GM12878 (cell line): ENCODE measurements at regions of chr18 and their contacts with region 1.

Region 1: GRCh38 chr18:58541789-58542425 is 87.0 kb downstream of the ALPK2 start:
- DNase-seq: peak; percentile 91
- ATAC-seq: peak; percentile 52
- H3K4me3 ChIP-seq: no peak overlapping the region
- H3K27ac ChIP-seq: peak overlapping the region; percentile 100
- H3K4me1 ChIP-seq: peaks cover 62% of the 10 kb centered on the region
- H3K27me3 ChIP-seq: no peaks in the 10 kb centered on the region
- CTCF ChIP-seq: no peak
- EP300 ChIP-seq: peak; percentile 75 to 91; a peak in 3 of 4 replicates
- POLR2A ChIP-seq: no peak
- RAD21 ChIP-seq: peak; percentile 24; the same call in 1 of the 2 replicates

Region 2: DNA sequence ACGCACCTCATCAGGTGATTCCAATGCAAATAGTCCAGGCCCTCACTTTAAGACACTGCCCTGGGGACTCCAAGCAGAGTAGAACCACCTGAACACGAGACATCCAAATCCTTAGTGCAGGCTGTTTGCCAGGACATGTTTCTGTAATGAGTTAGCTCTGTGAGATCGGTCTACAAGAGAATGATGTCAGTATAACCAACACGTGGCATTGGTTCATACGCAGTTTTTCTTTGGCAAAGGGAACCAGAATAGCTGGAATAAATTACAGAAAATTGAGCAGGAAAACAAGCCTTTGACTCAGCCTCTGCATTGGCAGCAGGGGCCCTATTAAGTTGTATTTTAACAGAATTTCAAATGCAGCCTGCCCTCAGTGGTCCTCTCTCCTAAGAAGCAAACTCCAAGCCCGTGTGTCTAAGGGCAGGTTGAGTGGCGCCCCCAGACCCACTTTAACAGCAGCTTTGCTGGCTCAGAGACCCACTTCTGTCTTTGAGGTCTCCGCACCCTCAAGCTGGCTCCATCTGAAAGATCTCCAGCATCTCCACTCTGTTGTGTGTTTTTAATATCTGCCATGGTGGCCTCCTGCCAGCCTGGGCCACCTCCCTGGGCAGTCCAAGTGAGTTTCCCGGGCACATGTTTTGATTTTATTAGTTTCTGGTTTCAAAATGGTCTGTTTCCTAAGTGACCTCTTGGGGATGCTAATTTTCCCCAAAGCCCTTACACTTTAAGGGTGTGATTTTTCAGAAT is 25.7 kb after region 1 on chr18:
- CTCF ChIA-PET with region 1: interaction called, 83 read pairs
- POLR2A ChIA-PET with region 1: interaction called, 53 read pairs
- RAD21 ChIA-PET with region 1: interaction called, 353 read pairs
- SMC1A ChIA-PET with region 1: interaction called, 578 read pairs
- in situ Hi-C with region 1: no loop called
- intact Hi-C with region 1: loop called (anchors 1 kb)
- DNase-seq: no peak
- ATAC-seq: no peak
- H3K4me3 ChIP-seq: no peak overlapping the region
- H3K27ac ChIP-seq: no peak overlapping the region
- H3K4me1 ChIP-seq: peaks cover 28% of the 10 kb centered on the region
- H3K27me3 ChIP-seq: no peaks in the 10 kb centered on the region
- CTCF ChIP-seq: no peak
- EP300 ChIP-seq: no peak
- POLR2A ChIP-seq: no peak
- RAD21 ChIP-seq: no peak

Region 3: GRCh38 chr18:58649966-58650816 is 108.3 kb after region 1 on chr18:
- CTCF ChIA-PET with region 1: interaction called, 5 read pairs
- POLR2A ChIA-PET with region 1: interaction called, 14 read pairs
- RAD21 ChIA-PET with region 1: interaction called, 11 read pairs
- SMC1A ChIA-PET with region 1: interaction called, 682 read pairs
- in situ Hi-C with region 1: no loop called
- intact Hi-C with region 1: no loop called
- DNase-seq: peak; percentile 80
- ATAC-seq: peak; percentile 81
- H3K4me3 ChIP-seq: 0 out of 2 replicates have a peak overlapping the region, but pooled peaks have one; percentile 12
- H3K27ac ChIP-seq: peak overlapping the region; percentile 80
- H3K4me1 ChIP-seq: peaks cover 24% of the 10 kb centered on the region
- H3K27me3 ChIP-seq: no peaks in the 10 kb centered on the region
- CTCF ChIP-seq: no peak
- EP300 ChIP-seq: peak; percentile 37 to 85; a peak in 3 of 4 replicates
- POLR2A ChIP-seq: no peak
- RAD21 ChIP-seq: 0 out of 2 replicates have a peak, but pooled peaks have one; percentile 1

Region 4: DNA sequence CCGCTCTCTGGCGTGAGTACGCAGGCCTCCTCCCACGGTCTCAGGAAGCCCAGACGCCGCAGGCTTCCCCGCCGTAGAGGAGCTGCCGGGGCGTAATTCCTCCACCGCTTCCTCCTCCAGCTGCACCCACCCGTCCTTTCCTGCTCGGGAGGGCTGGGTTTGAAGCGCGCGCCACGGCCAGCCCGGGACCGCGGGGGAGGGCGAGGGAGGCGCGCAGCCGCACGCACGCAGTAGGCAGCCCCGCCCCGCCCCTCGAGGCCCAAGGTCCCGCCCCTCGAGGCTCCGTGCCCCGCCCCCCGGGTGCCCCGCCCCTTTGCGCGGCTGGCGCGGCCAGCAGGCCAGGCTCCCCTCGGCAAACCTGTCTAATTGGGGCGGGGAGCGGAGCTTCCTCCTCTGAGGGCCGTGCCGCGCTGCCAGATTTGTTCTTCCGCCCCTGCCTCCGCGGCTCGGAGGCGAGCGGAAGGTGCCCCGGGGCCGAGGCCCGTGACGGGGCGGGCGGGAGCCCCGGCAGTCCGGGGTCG is 129.3 kb after region 1 on chr18 and contains the start of gene MALT1:
- CTCF ChIA-PET with region 1: interaction called, 32 read pairs
- POLR2A ChIA-PET with region 1: interaction called, 40 read pairs
- RAD21 ChIA-PET with region 1: interaction called, 113 read pairs
- SMC1A ChIA-PET with region 1: interaction called, 682 read pairs
- in situ Hi-C with region 1: no loop called
- intact Hi-C with region 1: loop called (anchors 2 kb)
- DNase-seq: peak; percentile 75
- ATAC-seq: peak; percentile 78
- H3K4me3 ChIP-seq: peak within 1 kb of the TSS; percentile 95
- H3K27ac ChIP-seq: peak within 1 kb of the TSS; percentile 93
- H3K4me1 ChIP-seq: peaks cover 16% of the 10 kb centered on the region; the same call in 1 of the 2 replicates
- H3K27me3 ChIP-seq: no peaks in the 10 kb centered on the region
- CTCF ChIP-seq: no peak
- EP300 ChIP-seq: peak in 1 of 2 experiments; percentile 17; a peak in 1 of 4 replicates
- POLR2A ChIP-seq: peak; percentile 96
- RAD21 ChIP-seq: no peak; the same call in 1 of the 2 replicates
- polyA plus RNA-seq, gene MALT1: 17.6 to 32.5 TPM

Region 5: DNA sequence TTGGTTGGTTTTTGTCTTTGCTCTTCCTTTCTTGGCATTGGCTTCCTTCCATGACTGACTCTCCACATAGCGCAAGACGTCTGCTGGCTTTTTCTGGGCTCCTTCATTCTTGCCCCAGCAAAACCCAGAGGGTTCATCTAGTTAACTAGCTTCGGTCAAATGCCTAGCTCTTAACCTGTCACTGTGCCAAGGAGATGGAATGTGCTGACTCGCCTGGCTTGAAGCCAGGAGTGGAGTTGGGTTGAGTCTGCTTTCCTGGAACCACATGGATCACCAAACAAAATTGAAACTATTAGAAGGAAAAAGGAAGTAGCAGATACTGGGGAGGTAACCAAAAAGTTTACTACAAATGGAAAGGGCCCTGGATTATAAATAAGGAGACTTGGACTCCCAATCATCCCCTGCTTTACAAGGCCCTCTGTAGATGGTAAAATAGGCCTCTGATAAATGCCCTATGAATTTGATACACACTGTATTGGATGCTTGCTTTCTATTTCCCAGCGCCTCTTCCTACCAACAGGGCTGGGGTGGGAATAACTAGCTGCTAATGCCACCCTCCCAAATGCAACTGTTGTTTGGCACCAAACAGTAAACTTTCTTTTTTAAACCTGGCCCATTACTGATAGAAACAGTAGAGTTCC is 140.6 kb after region 1 on chr18:
- CTCF ChIA-PET with region 1: interaction called, 13 read pairs
- POLR2A ChIA-PET with region 1: interaction called, 3 read pairs
- RAD21 ChIA-PET with region 1: interaction called, 12 read pairs
- SMC1A ChIA-PET with region 1: interaction called, 11 read pairs
- in situ Hi-C with region 1: no loop called
- intact Hi-C with region 1: no loop called
- DNase-seq: no peak
- ATAC-seq: no peak
- H3K4me3 ChIP-seq: no peak overlapping the region
- H3K27ac ChIP-seq: peak overlapping the region; percentile 20; the same call in 1 of the 2 replicates
- H3K4me1 ChIP-seq: peaks cover 4% of the 10 kb centered on the region
- H3K27me3 ChIP-seq: no peaks in the 10 kb centered on the region
- CTCF ChIP-seq: no peak
- EP300 ChIP-seq: no peak
- POLR2A ChIP-seq: no peak
- RAD21 ChIP-seq: no peak

Region 6: DNA sequence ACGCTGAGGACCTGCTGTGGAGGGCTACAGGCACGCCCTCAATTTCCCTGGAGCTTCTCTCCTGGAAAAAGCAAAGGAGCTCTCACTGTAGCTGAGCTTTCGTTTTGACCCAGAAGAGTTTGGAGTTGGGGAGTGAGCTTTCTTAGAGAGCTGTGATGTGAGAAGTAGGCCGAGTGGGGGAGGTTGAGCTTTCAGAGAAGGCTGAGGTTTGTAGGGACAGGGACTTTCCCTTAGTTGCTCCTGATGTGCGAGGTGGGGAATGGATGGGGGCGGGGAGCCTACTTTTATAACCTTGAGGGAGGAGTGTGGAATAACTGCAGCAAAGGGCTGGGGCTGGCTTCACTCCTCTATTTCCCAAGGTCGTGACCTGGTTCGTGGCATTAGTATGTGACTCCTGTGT is 369.9 kb after region 1 on chr18:
- CTCF ChIA-PET with region 1: no interaction called
- POLR2A ChIA-PET with region 1: no interaction called
- RAD21 ChIA-PET with region 1: no interaction called
- SMC1A ChIA-PET with region 1: no interaction called
- in situ Hi-C with region 1: no loop called
- intact Hi-C with region 1: no loop called
- DNase-seq: no peak
- ATAC-seq: no peak
- H3K4me3 ChIP-seq: no peak overlapping the region
- H3K27ac ChIP-seq: no peak overlapping the region
- H3K4me1 ChIP-seq: peaks cover 8% of the 10 kb centered on the region
- H3K27me3 ChIP-seq: peaks cover 0 to 2% of the 10 kb centered on the region in 2 experiments; a peak in 1 of 4 replicates
- CTCF ChIP-seq: no peak
- EP300 ChIP-seq: no peak
- POLR2A ChIP-seq: no peak
- RAD21 ChIP-seq: no peak